Dendritic cell treated with granulocyte-macrophage colony-stimulating factor and Interleukin-4, amounts not matched to agents 40 ng/mL and 50 ng/mL, for 4 days (primary cell): ENCODE measurements at regions of chr15 and their contacts with region 1.

Region 1: GRCh38 chr15:83066734-83067637 is at the start of gene BTBD1:
- H3K4me3 Mint-ChIP-seq: peak within 1 kb of the TSS; percentile 82
- H3K27ac Mint-ChIP-seq: peak within 1 kb of the TSS; percentile 82
- H3K4me1 Mint-ChIP-seq: peaks cover 22% of the 10 kb centered on the region
- H3K27me3 Mint-ChIP-seq: peaks cover under 1% of the 10 kb centered on the region

Region 2: DNA sequence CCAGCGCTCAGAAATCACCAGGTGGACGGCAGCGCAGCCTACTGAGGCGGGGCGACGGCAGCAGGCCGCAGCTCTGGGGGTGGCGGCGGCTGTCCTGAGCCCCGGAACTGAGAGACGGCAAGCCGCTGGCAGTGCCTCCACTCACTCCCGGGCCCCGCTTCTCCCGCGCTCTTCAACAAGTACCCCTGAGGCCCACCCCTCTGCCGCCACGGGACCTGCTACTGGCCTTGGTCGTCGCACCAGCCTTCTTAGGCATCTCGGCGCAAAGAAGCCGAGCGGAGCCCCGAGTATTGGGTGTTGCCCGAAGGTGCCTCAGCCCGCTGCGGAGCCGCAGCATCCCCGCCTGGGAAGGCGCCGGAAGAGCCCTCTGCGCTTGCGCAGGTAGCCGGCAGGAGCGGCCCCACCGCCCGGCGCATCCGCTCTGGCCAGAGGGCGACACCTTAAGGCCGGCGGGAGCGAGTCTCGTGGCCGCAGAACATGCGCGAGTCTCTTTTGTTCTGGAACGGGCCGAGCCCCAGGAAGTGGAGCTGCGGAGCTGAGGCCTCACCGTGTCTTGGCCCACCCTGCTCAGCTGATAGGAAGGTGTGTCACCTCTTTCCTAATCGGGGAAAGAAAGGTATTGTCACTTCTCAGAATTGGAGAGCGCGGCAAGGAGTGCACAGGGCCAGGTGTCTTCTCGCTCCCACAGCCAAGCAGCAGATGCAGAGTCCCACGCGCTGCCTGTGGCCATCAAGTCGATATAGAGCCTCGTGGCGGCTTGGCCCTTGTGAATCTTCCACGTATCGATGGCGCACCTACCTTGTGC is 55.5 kb before region 1 on chr15 and contains the start of gene C15orf40:
- intact Hi-C with region 1: loop called (anchors 2 kb)
- H3K4me3 Mint-ChIP-seq: peak within 1 kb of the TSS; percentile 94
- H3K27ac Mint-ChIP-seq: peak within 1 kb of the TSS; percentile 87
- H3K4me1 Mint-ChIP-seq: peaks cover 40% of the 10 kb centered on the region
- H3K27me3 Mint-ChIP-seq: no peaks in the 10 kb centered on the region

Region 3: GRCh38 chr15:83030021-83030420 is 37.0 kb before region 1 on chr15:
- intact Hi-C with region 1: no loop called
- H3K4me3 Mint-ChIP-seq: no peak overlapping the region
- H3K27ac Mint-ChIP-seq: no peak overlapping the region
- H3K4me1 Mint-ChIP-seq: no peaks in the 10 kb centered on the region
- H3K27me3 Mint-ChIP-seq: no peaks in the 10 kb centered on the region

Region 4: DNA sequence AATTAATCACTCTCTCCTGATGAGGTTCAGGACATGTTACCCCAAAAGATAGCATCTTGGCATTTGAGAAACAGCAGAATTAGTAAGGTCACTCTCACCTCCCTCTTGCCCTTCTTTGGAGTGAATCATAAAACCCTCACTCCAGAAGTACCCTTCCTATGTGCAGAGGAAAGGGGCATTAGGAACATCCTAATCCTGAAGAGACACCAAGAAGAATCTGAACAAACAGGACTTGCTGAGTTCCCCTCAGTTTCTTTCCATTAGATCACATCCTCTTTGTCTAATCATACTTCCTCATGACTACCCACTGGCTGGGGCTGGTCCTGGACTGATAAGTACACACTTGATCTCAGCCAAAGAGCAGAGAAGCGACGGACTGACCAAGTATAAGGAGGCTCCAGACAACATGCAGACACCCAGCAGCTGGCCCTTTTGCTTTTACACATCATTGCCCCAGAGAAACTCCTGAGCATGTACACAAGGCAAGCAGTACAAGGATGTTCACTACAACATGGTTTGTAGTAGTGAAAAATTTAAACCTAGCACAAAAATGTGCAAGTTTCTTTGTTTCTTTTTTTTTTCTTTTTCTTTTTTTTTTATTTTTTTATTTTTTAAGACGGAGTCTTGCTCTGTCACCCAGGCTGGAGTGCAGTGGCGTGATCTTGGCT is 25.5 kb after region 1 on chr15:
- intact Hi-C with region 1: loop called (anchors 1 kb)
- H3K4me3 Mint-ChIP-seq: peak overlapping the region; percentile 48
- H3K27ac Mint-ChIP-seq: peak overlapping the region; percentile 91
- H3K4me1 Mint-ChIP-seq: peaks cover 39% of the 10 kb centered on the region
- H3K27me3 Mint-ChIP-seq: peaks cover 9% of the 10 kb centered on the region

Region 5: GRCh38 chr15:83108266-83109226 is 41.6 kb after region 1 on chr15:
- intact Hi-C with region 1: loop called (anchors 1 kb)
- H3K4me3 Mint-ChIP-seq: peak overlapping the region; percentile 91
- H3K27ac Mint-ChIP-seq: peak overlapping the region; percentile 96
- H3K4me1 Mint-ChIP-seq: peaks cover 69% of the 10 kb centered on the region
- H3K27me3 Mint-ChIP-seq: peaks cover 11% of the 10 kb centered on the region

Region 6: GRCh38 chr15:83207622-83208411 is 140.8 kb after region 1 on chr15 and contains the start of gene HDGFL3:
- intact Hi-C with region 1: loop called (anchors 5 kb)
- H3K4me3 Mint-ChIP-seq: peak within 1 kb of the TSS; percentile 73
- H3K27ac Mint-ChIP-seq: peak within 1 kb of the TSS; percentile 51
- H3K4me1 Mint-ChIP-seq: peaks cover 9% of the 10 kb centered on the region
- H3K27me3 Mint-ChIP-seq: peaks cover 15% of the 10 kb centered on the region